ENCODE measurements at regions of chr1 and their contacts with region 1.

Region 1: DNA sequence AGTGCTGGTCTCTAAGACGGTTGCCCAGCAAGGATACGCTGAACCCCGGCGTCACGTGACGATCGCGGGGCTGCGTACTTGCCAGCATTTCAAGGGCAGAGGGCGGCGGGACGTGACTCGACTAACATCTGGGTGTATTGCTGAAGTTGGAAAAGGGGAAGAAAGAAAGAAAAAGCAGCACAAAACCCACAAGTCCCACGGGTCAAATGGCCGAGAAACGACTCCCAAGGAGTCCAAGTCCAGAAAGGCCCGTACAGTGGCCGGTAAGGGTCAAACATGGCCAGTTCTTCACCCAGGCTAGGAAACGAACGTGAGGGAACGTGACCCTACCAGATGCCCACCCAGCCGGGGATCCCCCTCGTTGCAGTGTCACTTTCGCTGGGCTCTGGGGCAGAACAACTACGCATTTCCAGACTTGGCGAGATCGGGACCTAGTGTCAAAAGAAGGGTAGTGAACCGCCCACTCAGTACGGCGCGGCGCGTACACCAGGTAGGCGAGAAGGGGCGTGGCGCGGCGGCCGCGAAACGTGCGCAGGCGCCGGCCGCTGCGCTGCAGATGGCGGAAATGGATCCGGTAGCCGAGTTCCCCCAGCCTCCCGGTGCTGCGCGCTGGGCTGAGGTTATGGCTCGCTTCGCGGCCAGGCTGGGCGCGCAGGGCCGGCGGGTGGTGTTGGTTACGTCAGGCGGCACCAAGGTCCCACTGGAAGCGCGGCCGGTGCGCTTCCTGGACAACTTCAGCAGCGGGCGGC is at the starts of genes PPCS and ZMYND12:
- DNase-seq: peak; percentile 88 to 92 (median 91)
- ATAC-seq: peak; percentile 94 to 97 (median 96)
- H3K4me3 ChIP-seq: peak within 1 kb of the TSS; percentile 63 to 100 (median 84)
- H3K27ac ChIP-seq: peak within 1 kb of the TSS; percentile 83 to 99 (median 90)
- H3K4me1 ChIP-seq: peaks cover 0 to 25% (median 15%) of the 10 kb centered on the region in 12 donors
- H3K27me3 ChIP-seq: no peaks in the 10 kb centered on the region
- CTCF ChIP-seq: peak in 2 of 12 donors; percentile 5 to 13
- POLR2A ChIP-seq: peak in 1 of 2 donors; percentile 58
- total RNA-seq, gene PPCS: 34.3 to 47.5 (median 37.0) TPM
- total RNA-seq, gene ZMYND12: 0.49 to 3.5 (median 2.3) TPM

Region 2: GRCh38 chr1:41980827-41981653 is 475.1 kb before region 1 on chr1:
- intact Hi-C with region 1: no loop called
- DNase-seq: no peak
- ATAC-seq: no peak
- H3K4me3 ChIP-seq: no peak overlapping the region
- H3K27ac ChIP-seq: no peak overlapping the region
- H3K4me1 ChIP-seq: peaks cover 0 to 10% (median 0%) of the 10 kb centered on the region in 12 donors
- H3K27me3 ChIP-seq: no peaks in the 10 kb centered on the region
- CTCF ChIP-seq: no peak
- POLR2A ChIP-seq: no peak

Region 3: GRCh38 chr1:42756956-42757891 is 301.0 kb after region 1 on chr1:
- intact Hi-C with region 1: loop called in 1 of 10 experiments (anchors 10 kb)
- DNase-seq: no peak
- ATAC-seq: peak in 3 of 4 donors; percentile 59 to 63 (median 60)
- H3K4me3 ChIP-seq: no peak overlapping the region
- H3K27ac ChIP-seq: no peak overlapping the region
- H3K4me1 ChIP-seq: peaks cover 0 to 4% (median 0%) of the 10 kb centered on the region in 12 donors
- H3K27me3 ChIP-seq: no peaks in the 10 kb centered on the region
- CTCF ChIP-seq: peak; percentile 52 to 73 (median 57)
- POLR2A ChIP-seq: no peak

Region 4: DNA sequence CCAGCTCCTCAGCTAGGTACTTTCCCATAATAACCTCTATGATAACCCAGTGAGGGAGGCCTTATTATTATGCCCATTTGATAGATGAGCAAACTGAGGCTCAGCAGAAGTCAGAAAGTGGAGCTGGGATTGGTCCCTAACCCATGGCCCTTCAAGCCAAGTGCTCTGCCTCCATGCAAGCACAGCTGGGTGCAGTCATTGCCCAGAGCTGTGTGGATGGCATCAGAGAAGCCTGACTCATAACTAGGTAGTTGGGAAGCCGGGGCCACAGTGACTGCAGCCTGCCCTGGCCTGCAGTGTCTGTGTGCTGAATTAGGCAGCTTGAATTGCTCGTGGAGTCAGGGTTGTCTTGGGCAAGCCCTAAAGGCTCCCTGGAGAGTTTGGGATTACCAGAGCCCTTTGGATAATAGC is 592.4 kb after region 1 on chr1:
- intact Hi-C with region 1: no loop called
- DNase-seq: no peak
- ATAC-seq: no peak
- H3K4me3 ChIP-seq: no peak overlapping the region
- H3K27ac ChIP-seq: no peak overlapping the region
- H3K4me1 ChIP-seq: no peaks in the 10 kb centered on the region
- H3K27me3 ChIP-seq: no peaks in the 10 kb centered on the region
- CTCF ChIP-seq: no peak
- POLR2A ChIP-seq: no peak